ENCODE measurements at regions of chr12 and their contacts with region 1.

Region 1: GRCh38 chr12:76031537-76032073 is at the start of gene PHLDA1:
- DNase-seq: peak; percentile 96
- H3K4me3 ChIP-seq: peak within 1 kb of the TSS; percentile 55 to 89 (median 77)
- H3K27ac ChIP-seq: peak within 1 kb of the TSS; percentile 89 to 97 (median 92)
- H3K4me1 ChIP-seq: peaks cover 2 to 59% (median 40%) of the 10 kb centered on the region in 6 donors
- H3K27me3 ChIP-seq: peaks cover 0 to 31% (median 8%) of the 10 kb centered on the region in 7 donors
- CTCF ChIP-seq: peak; percentile 10 to 72 (median 59)
- POLR2A ChIP-seq: peak in 2 of 3 donors; percentile 3 to 87
- total RNA-seq, gene PHLDA1: 9.3 to 44.4 (median 23.9) TPM

Region 2: DNA sequence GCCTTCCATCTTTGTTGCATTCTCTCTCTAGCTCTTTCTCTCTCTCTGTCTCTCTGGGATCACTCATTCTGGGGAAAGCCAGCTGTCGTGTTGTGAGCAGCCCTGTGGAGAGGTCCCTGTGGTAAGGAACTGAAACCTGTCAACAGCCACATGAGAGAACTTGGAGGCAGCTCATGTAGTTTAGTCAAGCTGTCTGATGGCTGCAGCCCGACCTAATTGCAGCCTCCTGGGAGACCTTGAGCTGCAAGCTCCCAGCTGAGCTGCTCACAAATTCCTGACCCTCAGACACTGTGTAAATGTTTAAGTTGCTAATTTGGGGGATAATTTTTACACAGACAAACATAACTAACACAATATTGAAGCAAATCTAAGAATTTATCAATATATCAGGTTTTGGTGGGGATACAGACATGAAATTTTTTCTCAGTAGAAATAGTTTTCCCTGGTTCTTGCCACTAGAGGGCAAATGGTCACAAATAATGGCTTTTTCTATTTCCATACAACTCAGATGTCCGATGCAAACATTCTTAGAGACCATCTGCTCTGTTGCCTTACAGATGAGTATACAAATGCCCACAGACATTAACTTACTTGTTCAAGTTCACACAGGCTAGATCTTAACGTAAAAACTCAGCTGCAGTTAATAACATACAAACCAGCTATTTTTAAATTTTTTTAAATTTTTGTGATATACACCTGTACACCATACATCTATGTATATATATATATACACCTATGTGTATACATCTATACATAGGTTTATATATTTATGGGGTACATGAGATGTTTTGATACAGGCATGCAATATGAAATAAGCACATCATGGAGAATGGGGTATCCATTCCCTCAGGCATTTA is 504.7 kb before region 1 on chr12:
- intact Hi-C with region 1: loop called (anchors 2 kb)
- DNase-seq: no peak
- H3K4me3 ChIP-seq: no peak overlapping the region
- H3K27ac ChIP-seq: no peak overlapping the region
- H3K4me1 ChIP-seq: peaks cover 0 to 9% (median 7%) of the 10 kb centered on the region in 6 donors
- H3K27me3 ChIP-seq: peaks cover 0 to 4% (median 0%) of the 10 kb centered on the region in 7 donors
- CTCF ChIP-seq: peak in 10 of 11 experiments; percentile 30 to 71 (median 64)
- POLR2A ChIP-seq: no peak